Activated B cell treated with CpG ODN at 0.5 μM for 24 hours (primary cell): ENCODE measurements at regions of chr12 and their contacts with region 1.

Region 1: DNA sequence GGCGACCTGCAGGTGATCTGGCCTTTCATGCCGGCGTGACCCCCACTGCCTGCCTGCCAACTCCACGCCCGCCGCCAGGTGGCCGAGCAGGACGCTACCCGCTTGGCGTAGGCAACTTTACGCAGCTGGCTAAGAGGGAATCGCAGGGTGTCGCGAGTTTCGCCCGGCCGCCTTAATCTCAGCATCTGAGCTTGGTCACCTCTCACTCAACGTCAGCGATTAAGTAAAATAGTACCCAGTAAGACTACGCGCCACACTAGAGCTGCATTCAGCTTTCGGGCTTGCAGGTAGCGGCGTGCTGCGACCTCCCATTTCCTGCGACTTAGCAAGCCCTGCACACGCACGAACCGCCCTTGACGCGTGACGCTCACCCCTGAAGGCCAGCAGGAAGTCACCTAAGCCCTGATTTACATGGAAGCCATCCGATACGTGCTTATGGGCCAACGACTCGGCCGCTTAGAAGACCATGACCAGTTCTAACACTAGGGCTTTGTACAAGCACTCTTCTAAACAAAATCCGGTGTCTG is 33.2 kb downstream of the WBP11 start:
- DNase-seq: peak; percentile 91
- ATAC-seq: peak; percentile 56
- H3K4me3 Mint-ChIP-seq: peak overlapping the region; percentile 98
- H3K27ac Mint-ChIP-seq: peak overlapping the region; percentile 99
- H3K4me1 Mint-ChIP-seq: peaks cover 61% of the 10 kb centered on the region
- H3K27me3 Mint-ChIP-seq: no peaks in the 10 kb centered on the region
- CTCF ChIP-seq: no peak

Region 2: DNA sequence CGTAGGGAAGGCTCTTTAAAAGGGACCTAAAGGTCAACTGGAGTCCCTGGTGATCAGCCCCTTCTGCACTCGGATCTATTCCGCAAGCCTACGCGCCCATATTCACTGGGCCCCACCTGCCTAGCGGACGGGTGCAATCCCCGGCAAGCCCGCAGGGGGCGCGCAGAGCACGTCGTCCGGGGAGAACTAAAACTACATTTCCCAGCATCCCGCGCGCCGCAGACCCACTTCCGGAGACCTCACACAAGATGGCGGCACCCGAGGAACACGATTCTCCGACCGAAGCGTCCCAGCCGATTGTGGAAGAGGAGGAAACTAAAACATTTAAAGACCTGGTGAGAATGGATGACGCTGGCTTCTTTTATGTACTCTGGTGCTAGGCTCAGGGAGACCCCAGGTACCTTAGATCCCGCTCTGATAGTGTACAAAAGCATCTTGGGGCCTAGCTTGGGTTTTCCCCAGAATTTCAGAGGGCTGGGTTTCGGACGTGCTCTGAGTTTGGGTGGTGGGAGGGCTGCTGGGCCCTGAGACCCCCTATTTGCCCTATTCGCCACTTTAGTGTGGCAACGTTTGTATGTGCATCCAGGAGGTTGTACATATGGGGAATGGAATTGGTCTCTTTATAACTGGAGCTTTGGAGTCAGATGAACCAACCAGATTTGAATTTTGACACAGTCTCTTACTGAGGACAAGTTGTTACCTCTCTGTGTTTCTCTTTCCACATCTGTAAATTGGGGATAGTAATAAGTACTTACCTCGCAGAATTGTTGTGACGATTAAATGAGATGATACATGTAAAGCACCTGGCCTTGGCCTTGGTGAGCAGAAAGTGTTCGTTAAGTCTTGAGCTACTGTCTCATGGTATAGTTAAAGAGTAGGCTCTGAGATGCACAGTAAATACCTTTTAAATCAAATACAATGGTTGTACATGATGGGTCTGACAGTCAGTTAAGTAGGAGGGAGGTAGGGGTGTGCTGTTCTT is 1956.6 kb before region 1 on chr12 and contains the start of gene DDX47:
- CTCF ChIA-PET with region 1: no interaction called
- POLR2A ChIA-PET with region 1: no interaction called
- intact Hi-C with region 1: loop called (anchors 5 kb)
- DNase-seq: peak; percentile 98
- ATAC-seq: peak; percentile 81
- H3K4me3 Mint-ChIP-seq: peak within 1 kb of the TSS; percentile 96
- H3K27ac Mint-ChIP-seq: peak within 1 kb of the TSS; percentile 93
- H3K4me1 Mint-ChIP-seq: peaks cover 69% of the 10 kb centered on the region
- H3K27me3 Mint-ChIP-seq: no peaks in the 10 kb centered on the region
- CTCF ChIP-seq: peak; percentile 87
- total RNA-seq, gene DDX47: 97.1 and 98.5 TPM in 2 replicates

Region 3: DNA sequence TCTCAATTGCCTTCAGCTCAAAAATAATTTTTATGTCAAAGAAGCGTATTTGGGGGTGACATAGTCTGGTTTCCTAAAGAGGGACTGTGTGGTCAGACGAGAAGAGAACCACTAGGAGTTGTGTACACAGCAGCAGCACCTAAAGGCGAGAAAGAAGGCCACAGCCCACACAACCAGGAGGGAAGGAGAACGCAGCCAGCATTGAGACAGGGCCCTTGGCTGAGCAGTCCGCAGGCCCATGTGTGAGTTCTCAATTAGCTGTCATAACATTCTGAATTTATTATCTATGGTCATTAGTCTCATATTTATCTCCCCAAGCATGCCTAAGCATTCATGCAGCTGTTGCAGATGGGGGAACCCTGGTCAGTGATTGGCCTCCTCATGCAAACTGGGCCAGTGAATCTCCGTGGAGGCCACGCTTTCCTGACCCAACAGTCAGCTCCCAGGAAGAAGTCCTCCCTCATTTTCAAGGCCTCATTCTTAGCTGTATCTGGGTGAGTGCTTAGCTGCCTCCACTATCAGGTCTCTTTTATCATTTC is 485.8 kb before region 1 on chr12:
- CTCF ChIA-PET with region 1: no interaction called
- POLR2A ChIA-PET with region 1: no interaction called
- intact Hi-C with region 1: loop called (anchors 2 kb)
- DNase-seq: no peak
- ATAC-seq: peak; percentile 36
- H3K4me3 Mint-ChIP-seq: peak overlapping the region; percentile 67
- H3K27ac Mint-ChIP-seq: peak overlapping the region; percentile 96
- H3K4me1 Mint-ChIP-seq: peaks cover 46% of the 10 kb centered on the region
- H3K27me3 Mint-ChIP-seq: no peaks in the 10 kb centered on the region
- CTCF ChIP-seq: no peak

Region 4: GRCh38 chr12:14532152-14532551 is 237.9 kb before region 1 on chr12:
- CTCF ChIA-PET with region 1: no interaction called
- POLR2A ChIA-PET with region 1: no interaction called
- intact Hi-C with region 1: no loop called
- DNase-seq: no peak
- ATAC-seq: no peak
- H3K4me3 Mint-ChIP-seq: no peak overlapping the region
- H3K27ac Mint-ChIP-seq: no peak overlapping the region
- H3K4me1 Mint-ChIP-seq: no peaks in the 10 kb centered on the region
- H3K27me3 Mint-ChIP-seq: no peaks in the 10 kb centered on the region
- CTCF ChIP-seq: no peak

Region 5: GRCh38 chr12:14782756-14783155 is 12.7 kb after region 1 on chr12:
- CTCF ChIA-PET with region 1: no interaction called
- POLR2A ChIA-PET with region 1: interaction called, 11 read pairs
- intact Hi-C with region 1: loop called (anchors 1 kb)
- DNase-seq: no peak
- ATAC-seq: no peak
- H3K4me3 Mint-ChIP-seq: no peak overlapping the region
- H3K27ac Mint-ChIP-seq: no peak overlapping the region
- H3K4me1 Mint-ChIP-seq: peaks cover 8% of the 10 kb centered on the region
- H3K27me3 Mint-ChIP-seq: no peaks in the 10 kb centered on the region
- CTCF ChIP-seq: no peak

Region 6: GRCh38 chr12:14948672-14949071 is 178.6 kb after region 1 on chr12:
- CTCF ChIA-PET with region 1: no interaction called
- POLR2A ChIA-PET with region 1: interaction called, 20 read pairs
- intact Hi-C with region 1: no loop called
- DNase-seq: no peak
- ATAC-seq: peak; percentile 91
- H3K4me3 Mint-ChIP-seq: peak overlapping the region; percentile 71
- H3K27ac Mint-ChIP-seq: peak overlapping the region; percentile 96
- H3K4me1 Mint-ChIP-seq: peaks cover 82% of the 10 kb centered on the region
- H3K27me3 Mint-ChIP-seq: no peaks in the 10 kb centered on the region
- CTCF ChIP-seq: no peak

Region 7: GRCh38 chr12:15522565-15523187 is 752.6 kb after region 1 on chr12:
- CTCF ChIA-PET with region 1: no interaction called
- POLR2A ChIA-PET with region 1: interaction called, 5 read pairs
- intact Hi-C with region 1: loop called (anchors 5 kb)
- DNase-seq: no peak
- ATAC-seq: no peak
- H3K4me3 Mint-ChIP-seq: no peak overlapping the region
- H3K27ac Mint-ChIP-seq: no peak overlapping the region
- H3K4me1 Mint-ChIP-seq: peaks cover 12% of the 10 kb centered on the region
- H3K27me3 Mint-ChIP-seq: peaks cover 15% of the 10 kb centered on the region
- CTCF ChIP-seq: no peak